ENCODE measurements at regions of chr9 and their contacts with region 1.

Region 1: GRCh38 chr9:27414220-27414761 is 109.8 kb upstream of the IFNK start:
- DNase-seq: peak; percentile 54
- H3K4me3 ChIP-seq: peak overlapping the region; percentile 50
- H3K27ac ChIP-seq: peak overlapping the region; percentile 63
- H3K4me1 ChIP-seq: peaks cover 27% of the 10 kb centered on the region
- H3K27me3 ChIP-seq: no peaks in the 10 kb centered on the region
- CTCF ChIP-seq: no peak

Region 2: DNA sequence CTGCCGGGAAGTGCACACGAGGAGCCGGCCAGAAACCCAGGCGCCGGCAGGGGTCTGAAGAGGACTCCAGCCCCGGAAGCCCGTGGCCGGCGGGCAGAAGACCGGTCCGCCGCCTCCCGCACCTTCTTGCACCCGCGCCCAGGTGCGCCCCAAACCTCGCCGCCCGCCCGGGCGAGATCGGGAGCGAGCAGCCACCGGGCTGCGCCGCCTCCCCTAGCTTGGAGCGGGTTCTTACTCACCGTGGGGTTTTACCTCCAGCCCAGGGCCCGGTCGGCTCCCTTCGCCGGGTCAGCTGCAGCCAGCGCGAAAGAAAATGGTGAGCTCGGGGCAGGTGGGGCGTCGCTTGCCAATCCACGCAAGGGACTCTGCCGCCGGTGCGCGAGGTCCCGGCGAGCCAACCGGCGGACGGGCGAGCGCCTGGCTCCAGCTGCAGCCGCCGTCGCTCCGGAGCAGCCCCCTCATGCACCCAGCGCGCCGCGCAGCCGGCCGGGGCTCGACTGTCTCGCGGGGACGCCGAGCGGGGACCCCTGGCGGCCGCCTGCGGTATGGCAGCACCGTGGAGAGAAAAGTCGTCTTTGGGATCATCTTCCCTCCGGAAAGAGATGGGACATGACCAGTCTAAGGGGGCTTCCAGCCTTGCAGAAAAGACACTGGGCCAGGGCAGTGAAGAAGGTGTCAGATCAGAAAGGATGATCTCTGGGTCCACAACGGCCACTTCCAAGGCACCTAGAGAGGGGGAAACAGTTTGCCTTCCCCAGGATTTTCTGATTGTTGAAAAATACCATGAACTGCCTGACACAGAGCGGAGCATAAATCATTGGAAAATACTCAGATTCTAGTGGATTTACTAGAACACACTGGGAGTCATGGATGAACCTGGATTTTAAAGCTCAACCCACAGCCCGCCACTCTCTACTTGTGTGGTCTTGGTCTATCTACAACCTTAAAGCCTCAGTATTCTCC is 115.3 kb after region 1 on chr9 and contains the start of gene MOB3B:
- intact Hi-C with region 1: loop called (anchors 10 kb)
- DNase-seq: peak; percentile 86
- H3K4me3 ChIP-seq: peak within 1 kb of the TSS; percentile 89
- H3K27ac ChIP-seq: peak within 1 kb of the TSS; percentile 81
- H3K4me1 ChIP-seq: peaks cover 50% of the 10 kb centered on the region
- H3K27me3 ChIP-seq: no peaks in the 10 kb centered on the region
- CTCF ChIP-seq: peak; percentile 96
- total RNA-seq, gene MOB3B: 2.1 TPM

Region 3: DNA sequence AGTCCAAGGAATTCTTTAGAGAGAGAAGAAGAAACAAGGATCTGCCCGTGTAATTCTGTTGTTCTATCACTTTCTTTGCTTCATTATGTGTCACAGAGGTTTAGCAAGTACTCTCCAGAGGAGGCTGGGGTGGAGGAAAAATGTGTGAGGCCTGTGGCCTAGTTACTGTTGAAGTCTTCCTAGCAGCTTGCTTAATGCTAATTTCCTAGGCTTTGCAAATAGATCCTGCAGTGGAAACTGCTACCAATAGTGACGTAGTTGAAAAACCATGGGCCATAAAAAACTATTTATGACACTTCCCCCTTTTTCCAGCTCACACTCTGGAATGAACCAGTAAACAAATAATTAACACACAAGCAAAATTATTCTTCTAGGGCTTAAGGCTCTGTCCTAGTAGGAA is 186.0 kb after region 1 on chr9:
- intact Hi-C with region 1: no loop called
- DNase-seq: no peak
- H3K4me3 ChIP-seq: no peak overlapping the region
- H3K27ac ChIP-seq: peak overlapping the region; percentile 49
- H3K4me1 ChIP-seq: no peaks in the 10 kb centered on the region
- H3K27me3 ChIP-seq: no peaks in the 10 kb centered on the region
- CTCF ChIP-seq: no peak